Endothelial cell of umbilical vein (primary cell): ENCODE measurements at regions of chr2 and their contacts with region 1.

Region 1: DNA sequence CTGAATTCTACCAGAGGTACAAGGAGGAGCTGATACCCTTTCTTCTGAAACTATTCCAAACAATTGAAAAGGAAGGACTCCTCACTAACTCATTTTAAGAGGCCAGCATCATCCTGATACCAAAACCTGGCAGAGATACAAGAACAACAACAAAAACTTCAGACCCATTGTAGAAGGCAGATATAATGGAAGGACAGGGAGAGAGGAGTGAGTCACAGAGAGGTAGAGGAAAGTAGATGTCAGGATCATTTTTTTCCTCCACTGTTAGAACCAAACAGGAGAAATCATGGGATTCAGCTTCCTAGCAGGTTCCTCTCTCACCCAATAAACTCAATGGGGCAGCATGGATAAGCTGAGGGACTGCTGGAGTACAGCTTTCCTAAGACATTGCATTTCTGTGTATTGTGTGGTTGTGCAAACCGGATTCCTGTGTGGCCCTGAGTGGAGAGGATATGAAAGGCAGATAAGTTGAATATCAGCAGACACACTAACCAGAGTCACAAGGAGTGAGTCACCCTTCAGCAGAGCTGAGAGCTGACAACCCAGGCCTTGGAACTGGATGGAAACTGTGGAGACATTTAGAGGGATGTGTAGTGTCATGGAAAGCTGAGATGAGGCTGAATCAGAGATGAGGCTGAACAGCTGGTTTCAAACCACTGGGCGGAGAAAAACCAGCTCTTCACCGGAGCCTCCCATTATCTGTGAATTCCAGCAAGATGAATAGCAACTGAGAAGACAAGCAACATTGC is 60.9 kb upstream of the MMADHC start:
- DNase-seq: peak; percentile 91
- H3K4me3 ChIP-seq: no peak overlapping the region
- H3K27ac ChIP-seq: peak overlapping the region; percentile 70
- H3K4me1 ChIP-seq: peaks cover 23% of the 10 kb centered on the region
- H3K27me3 ChIP-seq: no peaks in the 10 kb centered on the region
- CTCF ChIP-seq: no peak
- POLR2A ChIP-seq: no peak

Region 2: GRCh38 chr2:149246186-149246585 is 402.3 kb before region 1 on chr2:
- CTCF ChIA-PET with region 1: no interaction called
- POLR2A ChIA-PET with region 1: no interaction called
- dilution Hi-C with region 1: no loop called
- intact Hi-C with region 1: no loop called
- DNase-seq: peak; percentile 23
- H3K4me3 ChIP-seq: no peak overlapping the region
- H3K27ac ChIP-seq: no peak overlapping the region
- H3K4me1 ChIP-seq: no peaks in the 10 kb centered on the region
- H3K27me3 ChIP-seq: no peaks in the 10 kb centered on the region
- CTCF ChIP-seq: no peak
- POLR2A ChIP-seq: no peak

Region 3: GRCh38 chr2:149388120-149388798 is 260.2 kb before region 1 on chr2:
- CTCF ChIA-PET with region 1: no interaction called
- POLR2A ChIA-PET with region 1: no interaction called
- dilution Hi-C with region 1: no loop called
- intact Hi-C with region 1: no loop called
- DNase-seq: no peak
- H3K4me3 ChIP-seq: no peak overlapping the region
- H3K27ac ChIP-seq: no peak overlapping the region
- H3K4me1 ChIP-seq: no peaks in the 10 kb centered on the region
- H3K27me3 ChIP-seq: no peaks in the 10 kb centered on the region
- CTCF ChIP-seq: peak in 1 of 2 donors; percentile 5
- POLR2A ChIP-seq: no peak

Region 4: DNA sequence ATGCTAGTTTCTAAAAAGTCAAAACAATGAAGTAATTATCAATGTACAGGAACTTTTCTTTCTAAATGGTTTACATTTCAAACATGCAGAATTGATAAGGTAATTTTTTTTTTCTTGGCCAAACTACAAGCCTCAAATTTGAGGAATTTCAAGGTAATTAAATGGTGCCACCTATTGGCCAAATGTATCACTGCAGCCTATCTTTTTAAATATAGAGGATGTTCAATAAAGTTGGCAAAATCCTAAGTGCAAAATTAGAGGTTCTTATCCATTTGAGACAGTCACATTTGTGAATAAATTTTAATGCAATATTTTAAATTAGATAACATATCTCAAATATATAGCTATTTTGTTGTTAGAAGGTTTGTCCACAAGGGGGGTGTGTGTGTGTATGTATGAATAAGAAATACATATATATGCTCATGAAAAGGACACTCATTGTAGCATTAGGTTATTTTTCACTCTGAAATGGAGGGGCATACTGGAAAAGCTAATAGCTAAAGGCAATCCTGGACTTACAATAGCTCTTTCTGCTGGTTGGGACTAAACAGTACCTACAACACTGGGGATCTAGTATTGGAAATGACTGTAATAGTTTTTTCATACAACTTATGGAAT is 87.0 kb before region 1 on chr2:
- CTCF ChIA-PET with region 1: no interaction called
- POLR2A ChIA-PET with region 1: no interaction called
- dilution Hi-C with region 1: no loop called
- intact Hi-C with region 1: no loop called
- DNase-seq: peak; percentile 57
- H3K4me3 ChIP-seq: no peak overlapping the region
- H3K27ac ChIP-seq: no peak overlapping the region
- H3K4me1 ChIP-seq: peaks cover 7% of the 10 kb centered on the region
- H3K27me3 ChIP-seq: no peaks in the 10 kb centered on the region
- CTCF ChIP-seq: peak; percentile 40 to 55
- POLR2A ChIP-seq: no peak

Region 5: GRCh38 chr2:149661844-149662243 is 13.4 kb after region 1 on chr2:
- CTCF ChIA-PET with region 1: interaction called, 10 read pairs
- POLR2A ChIA-PET with region 1: no interaction called
- dilution Hi-C with region 1: no loop called
- intact Hi-C with region 1: loop called (anchors 1 kb)
- DNase-seq: peak; percentile 91
- H3K4me3 ChIP-seq: no peak overlapping the region
- H3K27ac ChIP-seq: peak overlapping the region; percentile 12
- H3K4me1 ChIP-seq: peaks cover 12% of the 10 kb centered on the region
- H3K27me3 ChIP-seq: no peaks in the 10 kb centered on the region
- CTCF ChIP-seq: no peak
- POLR2A ChIP-seq: no peak

Region 6: GRCh38 chr2:149715005-149715592 is 66.6 kb after region 1 on chr2:
- CTCF ChIA-PET with region 1: interaction called, 6 read pairs
- POLR2A ChIA-PET with region 1: no interaction called
- dilution Hi-C with region 1: no loop called
- intact Hi-C with region 1: loop called (anchors 2 kb)
- DNase-seq: peak; percentile 63
- H3K4me3 ChIP-seq: no peak overlapping the region
- H3K27ac ChIP-seq: no peak overlapping the region
- H3K4me1 ChIP-seq: no peaks in the 10 kb centered on the region
- H3K27me3 ChIP-seq: no peaks in the 10 kb centered on the region
- CTCF ChIP-seq: peak; percentile 71 to 76
- POLR2A ChIP-seq: no peak

Region 7: GRCh38 chr2:150166313-150167051 is 518.0 kb after region 1 on chr2:
- CTCF ChIA-PET with region 1: no interaction called
- POLR2A ChIA-PET with region 1: no interaction called
- dilution Hi-C with region 1: no loop called
- intact Hi-C with region 1: loop called (anchors 1 kb)
- DNase-seq: peak; percentile 59
- H3K4me3 ChIP-seq: no peak overlapping the region
- H3K27ac ChIP-seq: peak overlapping the region; percentile 61
- H3K4me1 ChIP-seq: peaks cover 39% of the 10 kb centered on the region
- H3K27me3 ChIP-seq: no peaks in the 10 kb centered on the region
- CTCF ChIP-seq: no peak
- POLR2A ChIP-seq: no peak

Region 8: DNA sequence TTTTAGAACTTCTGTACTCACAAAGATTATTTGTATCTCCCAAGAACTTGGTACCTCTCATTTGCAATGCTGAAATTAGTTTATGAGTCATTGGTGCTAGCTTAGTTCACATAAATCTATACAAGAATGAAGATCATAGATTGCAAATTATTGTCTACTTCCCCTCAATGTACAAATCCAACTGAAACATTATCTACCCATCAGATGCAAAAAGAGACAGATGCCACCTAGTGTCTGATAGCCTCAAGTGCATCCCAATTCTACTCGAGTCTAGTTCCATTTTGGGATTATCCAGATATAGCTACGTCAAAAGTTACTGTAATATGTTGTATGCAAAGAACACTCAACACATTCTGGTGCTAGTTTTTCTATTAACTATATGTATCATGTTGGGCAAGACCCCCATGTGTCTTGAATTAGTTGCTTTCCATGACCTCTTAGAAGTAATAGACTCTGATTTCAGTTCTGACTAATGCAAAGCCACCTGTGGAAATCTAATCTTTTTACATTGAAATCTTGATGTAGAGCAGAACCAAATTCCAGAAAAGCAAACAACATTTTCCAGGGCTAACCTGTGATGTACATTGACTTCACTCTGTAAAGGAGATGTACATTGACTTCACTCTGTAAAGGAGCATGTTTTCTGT is 1403.2 kb after region 1 on chr2:
- CTCF ChIA-PET with region 1: interaction called, 15 read pairs
- POLR2A ChIA-PET with region 1: no interaction called
- dilution Hi-C with region 1: no loop called
- intact Hi-C with region 1: no loop called
- DNase-seq: peak; percentile 69
- H3K4me3 ChIP-seq: no peak overlapping the region
- H3K27ac ChIP-seq: no peak overlapping the region
- H3K4me1 ChIP-seq: no peaks in the 10 kb centered on the region
- H3K27me3 ChIP-seq: no peaks in the 10 kb centered on the region
- CTCF ChIP-seq: peak; percentile 62 to 73
- POLR2A ChIP-seq: no peak